Posterior cingulate gyrus (tissue), 11 donors: ENCODE measurements at regions of chr22 and their contacts with region 1.

Region 1: DNA sequence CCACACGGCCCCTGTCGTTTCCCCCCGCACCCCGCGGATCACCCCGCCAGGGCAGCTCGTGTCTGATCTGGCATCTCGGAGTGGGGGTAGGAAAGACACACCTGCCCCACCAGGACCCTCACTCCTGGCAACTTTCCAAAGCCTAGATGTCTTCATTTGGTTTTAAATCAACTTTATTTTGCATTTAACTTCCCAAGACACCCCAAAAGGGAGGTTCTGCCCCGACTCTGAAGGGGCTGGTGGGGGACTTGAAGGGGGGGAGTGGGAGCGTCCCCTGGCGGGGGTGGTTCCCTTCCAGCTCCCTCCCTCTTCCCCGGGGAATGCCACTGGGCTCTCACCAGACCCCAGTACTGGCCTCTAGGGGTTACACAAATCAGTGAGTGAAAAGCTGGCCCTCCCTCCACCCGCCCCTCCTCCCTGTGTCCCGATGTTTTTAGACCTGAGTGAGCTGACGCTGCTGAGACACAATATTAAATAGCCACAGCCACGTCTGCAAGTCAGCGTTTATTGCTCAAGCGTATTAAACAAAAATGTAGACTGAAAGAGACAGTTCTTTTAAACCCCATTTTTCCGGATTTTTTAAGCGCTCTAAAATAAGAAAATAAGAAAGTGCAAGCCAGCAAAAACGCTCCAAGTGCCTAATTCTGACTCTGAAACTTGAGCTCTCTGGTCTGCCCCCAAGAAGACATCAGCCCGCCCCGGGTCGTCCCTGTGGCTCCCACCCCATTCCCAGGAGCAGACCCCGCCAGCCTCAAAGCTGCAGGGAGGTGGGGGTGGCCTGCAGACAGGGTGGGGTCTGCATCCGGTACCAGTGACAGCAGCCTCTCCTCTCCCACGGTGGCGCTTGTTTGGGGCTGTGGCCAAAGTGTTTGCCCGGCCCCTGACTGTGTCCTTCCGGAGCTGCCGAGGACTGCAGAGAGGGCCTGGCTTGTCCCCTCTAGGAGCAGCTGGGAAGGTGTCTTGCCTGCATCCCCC is 1.1 kb upstream of the TTLL8 start:
- DNase-seq: peak in 2 of 10 donors; percentile 52 to 78

Region 2: GRCh38 chr22:50074551-50075530 is 15.6 kb after region 1 on chr22:
- intact Hi-C with region 1: no loop called
- DNase-seq: peak in 3 of 10 donors; percentile 47 to 78 (median 64)

Region 3: GRCh38 chr22:50098052-50098451 is 38.9 kb after region 1 on chr22:
- intact Hi-C with region 1: loop called (anchors 1 kb)
- DNase-seq: no peak